ENCODE measurements at regions of chr11 and their contacts with region 1.

Region 1: GRCh38 chr11:63635762-63636465 is 21.7 kb upstream of the PLAAT3 start:
- DNase-seq: peak; percentile 59 to 84 (median 70)
- ATAC-seq: peak; percentile 93
- H3K4me3 ChIP-seq: no peak overlapping the region
- H3K4me3 Mint-ChIP-seq: no peak overlapping the region
- H3K27ac ChIP-seq: no peak overlapping the region
- H3K27ac Mint-ChIP-seq: no peak overlapping the region
- H3K4me1 ChIP-seq: peaks cover 5% of the 10 kb centered on the region
- H3K4me1 Mint-ChIP-seq: peaks cover 16% of the 10 kb centered on the region
- H3K27me3 ChIP-seq: no peaks in the 10 kb centered on the region
- H3K27me3 Mint-ChIP-seq: no peaks in the 10 kb centered on the region
- CTCF ChIP-seq: peak; percentile 86

Region 2: DNA sequence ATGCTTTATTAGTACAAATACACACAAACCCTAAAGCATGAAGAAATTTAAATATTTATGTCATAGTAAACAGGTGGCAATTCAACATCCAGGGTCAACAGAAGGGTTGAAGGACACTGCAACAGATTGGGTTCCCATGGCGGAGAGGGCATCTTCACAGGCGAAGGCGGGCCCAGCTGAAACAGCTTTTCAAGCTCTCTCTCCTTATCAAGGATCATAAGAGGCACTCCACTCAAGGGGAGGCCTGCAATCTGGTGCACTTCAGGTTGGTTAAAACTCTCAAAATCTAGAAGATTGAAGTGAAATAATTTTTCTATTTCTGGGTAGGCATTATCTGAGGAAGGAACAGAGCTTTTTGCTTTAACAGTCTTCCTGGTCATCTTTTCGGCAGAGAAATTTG is 603.5 kb before region 1 on chr11:
- CTCF ChIA-PET with region 1: interaction called, 3 read pairs
- POLR2A ChIA-PET with region 1: no interaction called
- intact Hi-C with region 1: loop called (anchors 5 to 10 kb)
- DNase-seq: no peak
- ATAC-seq: no peak
- H3K4me3 ChIP-seq: no peak overlapping the region
- H3K4me3 Mint-ChIP-seq: no peak overlapping the region
- H3K27ac ChIP-seq: no peak overlapping the region
- H3K27ac Mint-ChIP-seq: no peak overlapping the region
- H3K4me1 ChIP-seq: peaks cover 2% of the 10 kb centered on the region
- H3K4me1 Mint-ChIP-seq: no peaks in the 10 kb centered on the region
- H3K27me3 ChIP-seq: peaks cover 0 to 5% of the 10 kb centered on the region in 2 experiments
- H3K27me3 Mint-ChIP-seq: peaks cover 48% of the 10 kb centered on the region
- CTCF ChIP-seq: no peak

Region 3: GRCh38 chr11:63042596-63042995 is 593.3 kb before region 1 on chr11:
- CTCF ChIA-PET with region 1: no interaction called
- POLR2A ChIA-PET with region 1: no interaction called
- intact Hi-C with region 1: loop called (anchors 5 to 10 kb)
- DNase-seq: no peak
- ATAC-seq: no peak
- H3K4me3 ChIP-seq: no peak overlapping the region
- H3K4me3 Mint-ChIP-seq: no peak overlapping the region
- H3K27ac ChIP-seq: no peak overlapping the region
- H3K27ac Mint-ChIP-seq: no peak overlapping the region
- H3K4me1 ChIP-seq: no peaks in the 10 kb centered on the region
- H3K4me1 Mint-ChIP-seq: no peaks in the 10 kb centered on the region
- H3K27me3 ChIP-seq: peaks cover 4 to 7% of the 10 kb centered on the region in 2 experiments
- H3K27me3 Mint-ChIP-seq: peaks cover 52% of the 10 kb centered on the region
- CTCF ChIP-seq: no peak

Region 4: DNA sequence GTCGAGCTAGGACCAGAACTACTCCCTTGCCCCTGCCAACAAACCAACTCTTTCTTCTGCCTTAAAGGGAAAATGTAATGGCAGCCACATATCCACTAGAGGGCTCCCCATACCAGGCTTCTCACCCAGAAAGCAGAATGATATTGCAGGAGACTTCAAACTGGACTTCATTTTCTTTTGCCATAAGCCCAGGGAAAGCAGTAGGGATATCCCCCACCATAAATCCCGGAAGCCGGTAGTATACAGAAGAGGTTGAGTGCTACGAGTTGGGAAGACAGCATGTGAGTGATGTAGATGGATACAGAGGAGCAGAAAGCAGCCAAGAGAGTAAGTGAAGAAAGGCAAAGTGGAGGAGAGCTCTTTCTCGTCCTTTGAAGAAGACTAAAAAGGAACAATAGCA is 157.0 kb before region 1 on chr11:
- CTCF ChIA-PET with region 1: interaction called, 63 read pairs
- POLR2A ChIA-PET with region 1: interaction called, 16 read pairs
- intact Hi-C with region 1: loop called (anchors 1 kb)
- DNase-seq: peak; percentile 18 to 79 (median 38)
- ATAC-seq: peak; percentile 61
- H3K4me3 ChIP-seq: no peak overlapping the region
- H3K4me3 Mint-ChIP-seq: no peak overlapping the region
- H3K27ac ChIP-seq: no peak overlapping the region
- H3K27ac Mint-ChIP-seq: no peak overlapping the region
- H3K4me1 ChIP-seq: peaks cover 2% of the 10 kb centered on the region
- H3K4me1 Mint-ChIP-seq: no peaks in the 10 kb centered on the region
- H3K27me3 ChIP-seq: no peaks in the 10 kb centered on the region
- H3K27me3 Mint-ChIP-seq: peaks cover 12% of the 10 kb centered on the region
- CTCF ChIP-seq: peak; percentile 93

Region 5: GRCh38 chr11:63553741-63554151 is 82.2 kb before region 1 on chr11:
- CTCF ChIA-PET with region 1: interaction called, 3 read pairs
- POLR2A ChIA-PET with region 1: interaction called, 5 read pairs
- intact Hi-C with region 1: loop called in 1 of 2 experiments (anchors 5 kb)
- DNase-seq: peak in 13 of 14 experiments; percentile 40 to 82 (median 62)
- ATAC-seq: peak; percentile 80
- H3K4me3 ChIP-seq: peak overlapping the region; percentile 15
- H3K4me3 Mint-ChIP-seq: peak overlapping the region; percentile 90
- H3K27ac ChIP-seq: peak overlapping the region; percentile 48 to 63
- H3K27ac Mint-ChIP-seq: peak overlapping the region; percentile 89
- H3K4me1 ChIP-seq: peaks cover 47% of the 10 kb centered on the region
- H3K4me1 Mint-ChIP-seq: peaks cover 71% of the 10 kb centered on the region
- H3K27me3 ChIP-seq: no peaks in the 10 kb centered on the region
- H3K27me3 Mint-ChIP-seq: no peaks in the 10 kb centered on the region
- CTCF ChIP-seq: no peak

Region 6: DNA sequence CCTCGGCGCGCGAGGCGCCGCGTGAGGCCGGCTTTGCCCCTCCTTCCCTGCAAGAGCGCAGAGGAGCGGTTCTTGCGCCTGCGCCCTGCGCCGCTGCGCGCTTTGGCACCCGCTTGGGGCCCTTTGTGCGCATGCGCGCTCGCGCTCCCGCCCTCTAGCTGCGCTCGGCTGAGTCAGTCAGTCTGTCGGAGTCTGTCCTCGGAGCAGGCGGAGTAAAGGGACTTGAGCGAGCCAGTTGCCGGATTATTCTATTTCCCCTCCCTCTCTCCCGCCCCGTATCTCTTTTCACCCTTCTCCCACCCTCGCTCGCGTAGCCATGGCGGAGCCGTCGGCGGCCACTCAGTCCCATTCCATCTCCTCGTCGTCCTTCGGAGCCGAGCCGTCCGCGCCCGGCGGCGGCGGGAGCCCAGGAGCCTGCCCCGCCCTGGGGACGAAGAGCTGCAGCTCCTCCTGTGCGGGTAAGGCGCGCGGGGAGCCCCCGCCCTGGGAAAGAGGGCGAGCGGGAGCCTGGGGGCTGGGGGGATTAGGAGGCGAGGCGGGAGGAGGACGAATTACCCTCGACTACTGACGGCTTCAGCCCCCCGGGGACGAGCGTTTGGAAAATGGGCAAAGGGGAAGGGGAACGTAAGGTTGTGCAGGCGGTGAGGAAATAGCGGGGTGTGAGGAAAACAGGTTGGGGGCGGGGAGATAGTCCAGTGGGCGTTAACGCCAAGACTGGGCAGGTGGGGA is 45.6 kb after region 1 on chr11 and contains the start of gene RTN3:
- CTCF ChIA-PET with region 1: no interaction called
- POLR2A ChIA-PET with region 1: interaction called, 10 read pairs
- intact Hi-C with region 1: no loop called
- DNase-seq: peak; percentile 94 to 100 (median 98)
- ATAC-seq: peak; percentile 90
- H3K4me3 ChIP-seq: peak within 1 kb of the TSS; percentile 94
- H3K4me3 Mint-ChIP-seq: peak within 1 kb of the TSS; percentile 85
- H3K27ac ChIP-seq: peak within 1 kb of the TSS; percentile 62 to 92
- H3K27ac Mint-ChIP-seq: peak within 1 kb of the TSS; percentile 59
- H3K4me1 ChIP-seq: peaks cover 18% of the 10 kb centered on the region
- H3K4me1 Mint-ChIP-seq: peaks cover 31% of the 10 kb centered on the region
- H3K27me3 ChIP-seq: no peaks in the 10 kb centered on the region
- H3K27me3 Mint-ChIP-seq: no peaks in the 10 kb centered on the region
- CTCF ChIP-seq: no peak
- total RNA-seq, gene RTN3: 16.4 to 17.6 TPM